ENCODE measurements at regions of chr19 and their contacts with region 1.

Region 1: GRCh38 chr19:13060964-13061927 is 41.4 kb downstream of the LYL1 start:
- DNase-seq: peak; percentile 81
- H3K4me3 Mint-ChIP-seq: peak overlapping the region; percentile 58
- H3K27ac Mint-ChIP-seq: no peak overlapping the region
- H3K4me1 Mint-ChIP-seq: peaks cover 8% of the 10 kb centered on the region
- H3K27me3 Mint-ChIP-seq: no peaks in the 10 kb centered on the region
- CTCF ChIP-seq: peak; percentile 95

Region 2: GRCh38 chr19:12867120-12868099 is 193.8 kb before region 1 on chr19:
- CTCF ChIA-PET with region 1: no interaction called
- POLR2A ChIA-PET with region 1: no interaction called
- intact Hi-C with region 1: no loop called
- DNase-seq: peak; percentile 19
- H3K4me3 Mint-ChIP-seq: no peak overlapping the region
- H3K27ac Mint-ChIP-seq: no peak overlapping the region
- H3K4me1 Mint-ChIP-seq: no peaks in the 10 kb centered on the region
- H3K27me3 Mint-ChIP-seq: no peaks in the 10 kb centered on the region
- CTCF ChIP-seq: no peak

Region 3: DNA sequence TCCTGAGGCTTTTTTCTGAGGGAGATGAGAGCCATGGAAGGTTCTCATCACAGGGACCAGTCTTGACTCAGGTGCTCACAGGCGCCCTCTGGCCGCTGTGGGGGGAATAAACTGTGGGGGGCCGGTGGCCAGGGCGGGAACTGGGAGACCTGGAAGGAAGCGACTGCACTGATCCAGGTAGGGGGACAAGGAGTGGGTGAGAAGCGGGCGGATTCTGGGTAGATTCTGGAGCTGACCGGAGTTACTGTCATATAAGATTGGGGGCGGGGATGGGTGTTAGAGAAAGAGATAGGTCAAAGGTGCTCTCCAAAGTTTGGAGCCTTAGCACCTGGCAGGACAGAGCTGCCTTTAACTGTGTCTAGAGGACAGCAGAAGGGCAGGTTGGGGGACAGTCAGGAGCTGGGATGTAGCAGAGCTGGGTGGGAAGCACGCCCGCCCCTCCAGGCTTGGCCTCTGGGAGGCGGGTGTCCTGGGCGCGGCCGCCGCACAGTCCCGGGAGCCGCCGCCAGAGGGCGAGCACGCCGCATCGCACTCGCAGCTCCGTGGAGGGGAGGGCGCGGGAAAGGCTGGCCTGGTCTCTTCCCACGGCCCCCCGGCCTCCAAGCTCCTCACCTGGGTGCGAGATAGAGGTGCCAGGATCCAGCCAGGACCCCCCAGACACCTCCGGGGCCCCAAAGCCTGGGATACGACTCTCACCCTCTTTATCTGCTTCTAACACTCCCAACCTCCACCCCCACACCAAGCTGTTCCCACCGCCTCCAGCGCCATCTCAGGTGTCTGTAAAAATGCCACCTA is 96.0 kb before region 1 on chr19:
- CTCF ChIA-PET with region 1: interaction called, 76 read pairs
- POLR2A ChIA-PET with region 1: interaction called, 4 read pairs
- intact Hi-C with region 1: no loop called
- DNase-seq: peak; percentile 88
- H3K4me3 Mint-ChIP-seq: peak overlapping the region; percentile 85
- H3K27ac Mint-ChIP-seq: peak overlapping the region; percentile 12
- H3K4me1 Mint-ChIP-seq: peaks cover 6% of the 10 kb centered on the region
- H3K27me3 Mint-ChIP-seq: no peaks in the 10 kb centered on the region
- CTCF ChIP-seq: peak; percentile 76

Region 4: GRCh38 chr19:12983542-12984142 is 77.6 kb before region 1 on chr19:
- CTCF ChIA-PET with region 1: interaction called, 334 read pairs
- POLR2A ChIA-PET with region 1: interaction called, 3 read pairs
- intact Hi-C with region 1: loop called (anchors 1 kb)
- DNase-seq: peak; percentile 74
- H3K4me3 Mint-ChIP-seq: no peak overlapping the region
- H3K27ac Mint-ChIP-seq: no peak overlapping the region
- H3K4me1 Mint-ChIP-seq: peaks cover 6% of the 10 kb centered on the region
- H3K27me3 Mint-ChIP-seq: no peaks in the 10 kb centered on the region
- CTCF ChIP-seq: peak; percentile 94

Region 5: GRCh38 chr19:13002166-13002898 is 58.9 kb before region 1 on chr19:
- CTCF ChIA-PET with region 1: interaction called, 20 read pairs
- POLR2A ChIA-PET with region 1: no interaction called
- intact Hi-C with region 1: no loop called
- DNase-seq: no peak
- H3K4me3 Mint-ChIP-seq: no peak overlapping the region
- H3K27ac Mint-ChIP-seq: no peak overlapping the region
- H3K4me1 Mint-ChIP-seq: no peaks in the 10 kb centered on the region
- H3K27me3 Mint-ChIP-seq: no peaks in the 10 kb centered on the region
- CTCF ChIP-seq: no peak

Region 6: DNA sequence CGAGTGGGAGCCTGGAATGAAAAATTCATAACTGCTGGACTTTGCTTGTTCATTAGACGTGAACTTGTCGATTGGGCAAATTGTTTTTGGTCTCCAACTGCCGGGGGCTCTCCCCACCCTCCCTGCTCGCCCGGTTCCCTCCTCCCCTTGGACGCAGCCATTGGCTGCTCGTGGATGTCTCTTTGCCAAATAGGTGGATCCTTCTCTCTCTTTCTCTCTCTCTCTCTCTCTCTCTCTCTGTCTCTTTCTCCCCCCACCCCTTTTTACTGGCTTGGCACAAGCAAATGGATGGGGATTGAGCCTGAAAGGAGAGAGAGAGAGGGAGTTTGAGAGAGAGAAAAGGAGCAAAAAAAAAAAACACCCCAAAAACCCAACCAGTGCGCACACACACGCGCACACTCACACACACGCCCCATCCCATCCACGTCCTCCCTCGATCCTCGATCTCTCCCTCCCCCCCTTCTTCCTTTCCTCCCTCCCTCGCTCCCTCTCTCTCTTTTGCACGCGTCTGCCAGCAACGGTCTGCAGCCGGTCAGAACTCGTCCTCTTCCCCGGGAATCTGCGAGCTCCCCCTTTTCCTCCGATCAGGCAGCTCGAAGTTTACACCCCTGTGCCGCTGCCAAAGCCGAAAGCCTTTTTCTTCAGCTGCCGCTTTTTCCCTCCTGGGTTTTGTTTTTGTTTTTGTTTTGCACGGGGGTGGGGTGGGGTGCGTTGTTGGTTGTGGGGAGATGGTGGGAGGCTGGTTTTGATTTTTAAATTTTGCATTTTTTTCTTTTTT is 38.2 kb before region 1 on chr19:
- CTCF ChIA-PET with region 1: interaction called, 15 read pairs
- POLR2A ChIA-PET with region 1: interaction called, 4 read pairs
- intact Hi-C with region 1: loop called (anchors 5 kb)
- DNase-seq: peak; percentile 94
- H3K4me3 Mint-ChIP-seq: peak overlapping the region; percentile 69
- H3K27ac Mint-ChIP-seq: peak overlapping the region; percentile 69
- H3K4me1 Mint-ChIP-seq: peaks cover 48% of the 10 kb centered on the region
- H3K27me3 Mint-ChIP-seq: no peaks in the 10 kb centered on the region
- CTCF ChIP-seq: no peak

Region 7: DNA sequence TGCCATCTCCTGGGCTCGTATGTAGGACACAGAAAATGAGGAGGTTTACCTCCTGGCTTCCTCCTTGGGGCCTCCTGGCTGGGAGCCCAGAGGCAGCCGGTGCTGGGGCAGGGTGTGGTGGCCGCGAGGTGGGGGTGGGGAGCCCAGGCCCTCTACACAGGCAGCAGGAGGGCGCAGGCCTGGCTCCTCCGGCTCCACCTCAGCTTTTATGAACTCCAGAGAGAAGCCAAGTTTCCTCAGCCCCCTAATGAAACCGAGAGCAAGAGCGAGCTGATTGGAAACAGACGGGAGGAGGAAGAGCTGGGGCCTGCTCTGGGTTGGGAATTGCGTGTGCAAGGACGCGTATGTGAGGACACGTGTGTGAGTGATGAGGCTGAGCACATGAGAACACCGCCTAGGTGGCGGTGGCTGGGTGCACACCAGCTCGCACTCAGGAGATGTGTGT is 18.3 kb after region 1 on chr19:
- CTCF ChIA-PET with region 1: interaction called, 23 read pairs
- POLR2A ChIA-PET with region 1: no interaction called
- intact Hi-C with region 1: no loop called
- DNase-seq: no peak
- H3K4me3 Mint-ChIP-seq: no peak overlapping the region
- H3K27ac Mint-ChIP-seq: no peak overlapping the region
- H3K4me1 Mint-ChIP-seq: peaks cover 9% of the 10 kb centered on the region
- H3K27me3 Mint-ChIP-seq: no peaks in the 10 kb centered on the region
- CTCF ChIP-seq: no peak

Region 8: DNA sequence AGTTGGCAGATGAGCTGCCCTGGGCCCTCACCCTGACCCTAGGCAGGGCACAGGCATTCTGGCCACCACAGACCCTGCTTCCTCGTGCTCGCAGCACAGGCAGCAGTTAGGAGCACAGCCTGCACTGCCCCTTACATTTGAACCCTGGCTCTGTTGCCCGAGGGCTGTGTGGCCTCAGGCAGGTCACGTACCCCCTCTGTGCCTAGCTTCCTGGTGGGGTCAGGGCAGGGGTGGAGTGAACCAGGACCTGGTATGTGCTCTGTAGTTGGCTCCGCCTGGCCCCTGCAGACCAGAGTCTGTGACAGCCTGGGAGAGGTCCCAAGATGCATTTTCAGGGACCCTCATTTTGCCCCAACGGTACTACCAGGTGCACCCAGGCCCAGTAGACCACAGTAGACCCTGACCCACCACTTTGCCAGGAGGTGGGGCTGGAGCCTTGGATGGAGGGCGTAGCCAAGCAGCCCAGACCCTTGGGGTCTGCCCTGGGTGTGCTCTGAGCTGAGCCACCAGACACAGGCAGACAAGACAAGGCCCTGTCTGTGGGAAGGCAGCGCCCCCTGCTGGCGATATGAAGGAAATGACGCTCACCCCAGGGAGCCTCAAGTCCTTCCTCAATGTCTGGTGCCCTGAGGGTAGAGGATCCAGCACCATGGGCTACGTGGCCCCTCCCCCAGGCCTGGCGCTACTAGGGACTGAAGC is 32.3 kb after region 1 on chr19:
- CTCF ChIA-PET with region 1: interaction called, 32 read pairs
- POLR2A ChIA-PET with region 1: no interaction called
- intact Hi-C with region 1: no loop called
- DNase-seq: peak; percentile 86
- H3K4me3 Mint-ChIP-seq: no peak overlapping the region
- H3K27ac Mint-ChIP-seq: no peak overlapping the region
- H3K4me1 Mint-ChIP-seq: peaks cover 5% of the 10 kb centered on the region
- H3K27me3 Mint-ChIP-seq: no peaks in the 10 kb centered on the region
- CTCF ChIP-seq: peak; percentile 95

Region 9: DNA sequence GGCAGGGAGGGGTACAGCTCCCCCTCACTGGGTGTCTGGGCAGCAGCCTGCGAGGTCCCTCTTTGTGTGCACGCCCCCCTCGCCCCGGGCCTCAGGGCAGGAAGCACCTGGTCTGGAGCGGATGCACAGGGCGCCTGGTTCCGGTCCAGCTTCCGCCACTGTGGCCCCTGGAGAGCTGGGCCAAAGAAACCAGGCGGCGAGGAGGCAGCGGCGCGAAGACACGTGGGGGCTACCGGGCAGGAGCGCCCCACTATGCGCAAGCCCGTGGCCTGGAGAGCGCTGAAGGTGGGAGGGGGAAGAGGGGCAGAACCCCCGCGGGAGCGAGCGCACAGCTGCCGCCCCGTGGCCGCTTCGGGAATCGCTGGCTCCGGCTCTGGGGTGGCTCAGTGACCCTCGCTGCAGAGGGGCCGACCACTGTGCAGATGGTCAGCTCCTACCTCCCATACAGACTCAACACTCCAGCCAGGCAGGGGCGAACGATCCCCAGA is 43.2 kb after region 1 on chr19:
- CTCF ChIA-PET with region 1: no interaction called
- POLR2A ChIA-PET with region 1: no interaction called
- intact Hi-C with region 1: no loop called
- DNase-seq: no peak
- H3K4me3 Mint-ChIP-seq: no peak overlapping the region
- H3K27ac Mint-ChIP-seq: no peak overlapping the region
- H3K4me1 Mint-ChIP-seq: no peaks in the 10 kb centered on the region
- H3K27me3 Mint-ChIP-seq: no peaks in the 10 kb centered on the region
- CTCF ChIP-seq: no peak

Region 10: GRCh38 chr19:13297023-13297422 is 235.8 kb after region 1 on chr19:
- CTCF ChIA-PET with region 1: no interaction called
- POLR2A ChIA-PET with region 1: no interaction called
- intact Hi-C with region 1: no loop called
- DNase-seq: no peak
- H3K4me3 Mint-ChIP-seq: no peak overlapping the region
- H3K27ac Mint-ChIP-seq: no peak overlapping the region
- H3K4me1 Mint-ChIP-seq: no peaks in the 10 kb centered on the region
- H3K27me3 Mint-ChIP-seq: peaks cover 26% of the 10 kb centered on the region
- CTCF ChIP-seq: no peak

Region 11: GRCh38 chr19:13334801-13335481 is 273.7 kb after region 1 on chr19:
- CTCF ChIA-PET with region 1: no interaction called
- POLR2A ChIA-PET with region 1: no interaction called
- intact Hi-C with region 1: no loop called
- DNase-seq: no peak
- H3K4me3 Mint-ChIP-seq: peak overlapping the region; percentile 22
- H3K27ac Mint-ChIP-seq: no peak overlapping the region
- H3K4me1 Mint-ChIP-seq: no peaks in the 10 kb centered on the region
- H3K27me3 Mint-ChIP-seq: peaks cover 36% of the 10 kb centered on the region
- CTCF ChIP-seq: no peak

Measured in MCF 10A (cell line).